ENCODE measurements at regions of chr9 and their contacts with region 1.

Region 1: GRCh38 chr9:105842023-105842644 is 147.8 kb downstream of the TMEM38B start:
- DNase-seq: no peak
- ATAC-seq: no peak
- H3K4me3 ChIP-seq: no peak overlapping the region
- H3K27ac ChIP-seq: no peak overlapping the region
- H3K4me1 ChIP-seq: no peaks in the 10 kb centered on the region
- H3K27me3 ChIP-seq: no peaks in the 10 kb centered on the region
- CTCF ChIP-seq: peak; percentile 29 to 77 (median 62)

Region 2: DNA sequence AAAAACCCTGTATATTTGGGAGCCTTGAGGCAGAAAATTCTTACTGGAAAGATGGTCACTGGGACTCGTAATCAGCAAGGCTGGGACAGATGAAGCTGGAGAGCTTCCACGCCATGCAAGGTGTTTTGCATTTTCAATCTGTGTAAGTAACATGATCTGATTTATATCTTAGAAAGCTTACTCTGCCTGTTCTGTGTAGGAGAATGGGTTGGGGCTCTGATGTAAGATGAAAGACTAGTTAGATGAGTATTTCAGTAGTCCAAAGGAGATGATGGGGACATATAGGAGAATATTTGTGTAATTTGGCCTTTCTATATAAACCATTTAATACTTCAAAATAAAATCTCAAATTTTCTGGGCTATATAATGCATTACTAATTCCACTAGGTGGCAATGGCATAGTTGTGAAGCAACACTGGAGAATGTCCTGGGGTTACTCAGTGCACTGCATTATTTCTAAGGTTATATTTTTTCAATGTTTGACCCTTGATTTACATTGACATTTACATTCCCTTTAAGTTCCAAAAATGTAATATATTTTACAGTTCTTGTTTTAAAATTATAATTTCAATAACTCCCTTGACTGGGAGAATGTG is 416.2 kb before region 1 on chr9:
- intact Hi-C with region 1: no loop called
- DNase-seq: no peak
- ATAC-seq: peak in 4 of 8 donors; percentile 55 to 64 (median 58)
- H3K4me3 ChIP-seq: no peak overlapping the region
- H3K27ac ChIP-seq: no peak overlapping the region
- H3K4me1 ChIP-seq: no peaks in the 10 kb centered on the region
- H3K27me3 ChIP-seq: no peaks in the 10 kb centered on the region
- CTCF ChIP-seq: peak in 7 of 9 donors; percentile 48 to 68 (median 56)

Region 3: DNA sequence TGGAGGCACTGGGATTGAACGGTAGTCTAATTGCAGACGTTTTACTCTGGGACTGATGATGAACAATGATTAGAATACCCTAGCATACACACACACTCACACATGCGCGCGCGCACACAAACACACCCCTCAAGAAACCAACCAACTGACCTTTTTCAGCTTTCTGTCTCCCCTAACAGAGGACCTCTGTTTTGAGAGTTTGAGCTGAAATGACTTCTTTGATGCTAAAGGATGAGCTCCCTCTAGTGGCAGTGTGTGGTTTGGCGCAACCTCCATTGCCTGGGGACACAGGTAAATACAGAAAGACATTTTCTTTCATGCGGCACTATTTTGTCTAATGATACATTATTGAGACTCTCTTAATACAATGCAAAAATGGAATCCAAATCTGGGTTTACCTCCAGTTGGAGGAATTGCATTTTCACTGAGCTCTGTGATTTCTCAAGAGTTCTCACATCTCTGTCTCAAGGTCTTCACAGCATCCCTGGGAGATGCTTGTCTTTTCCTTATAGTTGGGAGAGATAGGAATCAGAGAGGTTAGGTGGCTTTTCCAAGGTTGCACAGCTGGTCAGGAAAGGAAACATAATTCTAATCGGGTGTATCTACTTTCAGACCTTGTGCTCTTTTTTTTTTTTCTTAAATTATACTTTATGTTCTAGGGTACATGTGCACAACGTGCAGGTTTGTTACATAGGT is 39.7 kb after region 1 on chr9:
- intact Hi-C with region 1: loop called in 2 of 10 experiments (anchors 1 to 2 kb)
- DNase-seq: peak; percentile 40 to 44
- ATAC-seq: peak in 2 of 8 donors; percentile 34 to 51
- H3K4me3 ChIP-seq: no peak overlapping the region
- H3K27ac ChIP-seq: no peak overlapping the region
- H3K4me1 ChIP-seq: no peaks in the 10 kb centered on the region
- H3K27me3 ChIP-seq: no peaks in the 10 kb centered on the region
- CTCF ChIP-seq: peak; percentile 52 to 93 (median 86)

Region 4: GRCh38 chr9:106052166-106052565 is 210.0 kb after region 1 on chr9:
- intact Hi-C with region 1: no loop called
- DNase-seq: no peak
- ATAC-seq: no peak
- H3K4me3 ChIP-seq: no peak overlapping the region
- H3K27ac ChIP-seq: no peak overlapping the region
- H3K4me1 ChIP-seq: no peaks in the 10 kb centered on the region
- H3K27me3 ChIP-seq: no peaks in the 10 kb centered on the region
- CTCF ChIP-seq: no peak